Posterior vena cava (tissue), 2 donors: ENCODE measurements at regions of chr6 and their contacts with region 1.

Region 1: GRCh38 chr6:32960563-32960962 is 7.7 kb upstream of the HLA-DMA start:
- DNase-seq: no peak

Region 2: GRCh38 chr6:32894080-32895005 is 66.2 kb before region 1 on chr6:
- intact Hi-C with region 1: loop called in 1 of 2 experiments (anchors 2 kb)
- DNase-seq: peak; percentile 97

Region 3: GRCh38 chr6:33926451-33926850 is 965.9 kb after region 1 on chr6:
- intact Hi-C with region 1: no loop called
- DNase-seq: no peak